PC-3 (cell line): ENCODE measurements at regions of chr1 and their contacts with region 1.

Region 1: GRCh38 chr1:67149179-67149770 is 14.5 kb upstream of the C1orf141 start:
- DNase-seq: peak; percentile 72
- ATAC-seq: peak; percentile 93
- H3K4me3 ChIP-seq: no peak overlapping the region
- H3K27ac ChIP-seq: 0 out of 2 replicates have a peak overlapping the region, but pooled peaks have one; percentile 0
- H3K4me1 ChIP-seq: peaks cover 6% of the 10 kb centered on the region
- H3K27me3 ChIP-seq: no peaks in the 10 kb centered on the region
- CTCF ChIP-seq: peak; percentile 81

Region 2: GRCh38 chr1:66764994-66765578 is 384.2 kb before region 1 on chr1:
- CTCF ChIA-PET with region 1: no interaction called
- POLR2A ChIA-PET with region 1: no interaction called
- intact Hi-C with region 1: loop called (anchors 2 kb)
- DNase-seq: peak; percentile 65
- ATAC-seq: peak; percentile 66
- H3K4me3 ChIP-seq: no peak overlapping the region
- H3K27ac ChIP-seq: no peak overlapping the region
- H3K4me1 ChIP-seq: no peaks in the 10 kb centered on the region
- H3K27me3 ChIP-seq: no peaks in the 10 kb centered on the region
- CTCF ChIP-seq: peak; percentile 92

Region 3: GRCh38 chr1:66996018-66996682 is 153.1 kb before region 1 on chr1:
- CTCF ChIA-PET with region 1: interaction called, 6 read pairs
- POLR2A ChIA-PET with region 1: no interaction called
- intact Hi-C with region 1: loop called (anchors 1 kb)
- DNase-seq: peak; percentile 81
- ATAC-seq: peak; percentile 79
- H3K4me3 ChIP-seq: no peak overlapping the region
- H3K27ac ChIP-seq: no peak overlapping the region
- H3K4me1 ChIP-seq: no peaks in the 10 kb centered on the region
- H3K27me3 ChIP-seq: no peaks in the 10 kb centered on the region
- CTCF ChIP-seq: peak; percentile 93

Region 4: GRCh38 chr1:67053785-67054772 is 95.2 kb before region 1 on chr1 and contains the start of gene SLC35D1:
- CTCF ChIA-PET with region 1: interaction called, 3 read pairs
- POLR2A ChIA-PET with region 1: interaction called, 4 read pairs
- intact Hi-C with region 1: loop called (anchors 5 kb)
- DNase-seq: peak; percentile 54
- ATAC-seq: peak; percentile 64
- H3K4me3 ChIP-seq: peak within 1 kb of the TSS; percentile 92
- H3K27ac ChIP-seq: peak within 1 kb of the TSS; percentile 68
- H3K4me1 ChIP-seq: peaks cover 23% of the 10 kb centered on the region
- H3K27me3 ChIP-seq: no peaks in the 10 kb centered on the region
- CTCF ChIP-seq: no peak
- total RNA-seq, gene SLC35D1: 5.3 and 6.1 TPM in 2 replicates

Region 5: GRCh38 chr1:67162957-67163356 is 13.7 kb after region 1 on chr1:
- CTCF ChIA-PET with region 1: interaction called, 30 read pairs
- POLR2A ChIA-PET with region 1: no interaction called
- intact Hi-C with region 1: no loop called
- DNase-seq: peak; percentile 97
- ATAC-seq: peak; percentile 97
- H3K4me3 ChIP-seq: no peak overlapping the region
- H3K27ac ChIP-seq: peak overlapping the region; percentile 92
- H3K4me1 ChIP-seq: peaks cover 16% of the 10 kb centered on the region
- H3K27me3 ChIP-seq: no peaks in the 10 kb centered on the region
- CTCF ChIP-seq: no peak

Region 6: GRCh38 chr1:67214420-67215174 is 65.3 kb after region 1 on chr1:
- CTCF ChIA-PET with region 1: interaction called, 6 read pairs
- POLR2A ChIA-PET with region 1: no interaction called
- intact Hi-C with region 1: loop called (anchors 1 kb)
- DNase-seq: peak; percentile 68
- ATAC-seq: peak; percentile 60
- H3K4me3 ChIP-seq: no peak overlapping the region
- H3K27ac ChIP-seq: no peak overlapping the region
- H3K4me1 ChIP-seq: no peaks in the 10 kb centered on the region
- H3K27me3 ChIP-seq: no peaks in the 10 kb centered on the region
- CTCF ChIP-seq: peak; percentile 79

Region 7: GRCh38 chr1:67339623-67340343 is 190.5 kb after region 1 on chr1:
- CTCF ChIA-PET with region 1: no interaction called
- POLR2A ChIA-PET with region 1: no interaction called
- intact Hi-C with region 1: loop called (anchors 10 kb)
- DNase-seq: peak; percentile 76
- ATAC-seq: peak; percentile 98
- H3K4me3 ChIP-seq: no peak overlapping the region; the same call in 1 of the 2 replicates
- H3K27ac ChIP-seq: peak overlapping the region; percentile 51
- H3K4me1 ChIP-seq: peaks cover 13% of the 10 kb centered on the region
- H3K27me3 ChIP-seq: no peaks in the 10 kb centered on the region
- CTCF ChIP-seq: no peak